A549 (cell line): ENCODE measurements at regions of chr6 and their contacts with region 1.

Region 1: DNA sequence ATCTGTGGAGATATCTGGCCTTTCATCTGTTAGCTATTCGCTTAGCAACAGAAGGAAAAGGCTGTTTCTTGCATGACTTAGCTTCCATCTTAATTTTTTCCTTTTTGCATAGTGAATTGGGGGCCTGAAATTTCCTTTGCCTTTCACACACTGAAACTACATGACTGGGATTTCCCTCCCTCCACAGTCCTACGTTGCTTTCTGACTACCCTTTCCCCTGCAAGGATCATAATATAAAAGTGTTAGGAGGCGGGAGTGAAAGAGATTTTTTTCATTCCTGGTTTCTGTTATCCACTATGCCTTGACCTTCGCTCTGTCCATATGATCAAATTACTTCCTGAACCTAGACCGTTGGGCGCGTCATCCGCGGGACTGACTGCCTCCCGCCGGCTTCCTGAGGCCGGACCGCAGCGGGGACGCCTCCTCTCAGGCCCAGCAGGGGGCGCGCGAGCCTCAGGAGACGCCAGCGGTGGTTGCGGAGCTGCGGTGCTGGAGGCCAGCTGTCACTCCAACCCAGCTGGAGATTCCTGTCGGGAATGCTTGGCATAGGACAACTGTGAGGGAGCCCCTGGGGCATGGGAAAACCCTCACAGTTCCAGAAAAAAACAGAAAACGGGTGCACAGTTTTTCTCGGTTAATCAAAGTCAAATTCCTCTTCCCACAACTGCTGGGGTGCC is 55.6 kb downstream of the MEP1A start:
- DNase-seq: peak; percentile 29 to 70
- ATAC-seq: peak; percentile 99 to 100
- H3K4me3 ChIP-seq: 0 out of 3 replicates have a peak overlapping the region, but pooled peaks have one; percentile 22
- H3K27ac ChIP-seq: peak overlapping the region; percentile 41 to 44; a peak in 2 of 6 replicates
- H3K4me1 ChIP-seq: 0 out of 3 replicates have a peak, but pooled peaks cover 3% of the 10 kb centered on the region
- CTCF ChIP-seq: peak; percentile 83
- EP300 ChIP-seq: no peak
- POLR2A ChIP-seq: no peak
- RAD21 ChIP-seq: peak; percentile 91 to 97

Region 2: GRCh38 chr6:46539866-46540265 is 309.0 kb before region 1 on chr6:
- CTCF ChIA-PET with region 1: no interaction called
- POLR2A ChIA-PET with region 1: no interaction called
- DNase-seq: no peak
- ATAC-seq: no peak
- H3K4me3 ChIP-seq: no peak overlapping the region
- H3K27ac ChIP-seq: no peak overlapping the region
- H3K4me1 ChIP-seq: no peaks in the 10 kb centered on the region
- CTCF ChIP-seq: no peak
- EP300 ChIP-seq: no peak
- POLR2A ChIP-seq: no peak
- RAD21 ChIP-seq: no peak

Region 3: GRCh38 chr6:46652603-46653438 is 196.0 kb before region 1 on chr6 and contains the starts of genes CYP39A1 and SLC25A27:
- CTCF ChIA-PET with region 1: no interaction called
- POLR2A ChIA-PET with region 1: no interaction called
- DNase-seq: peak; percentile 71 to 73
- ATAC-seq: peak; percentile 99 to 100
- H3K4me3 ChIP-seq: peak within 1 kb of the TSS; percentile 57
- H3K27ac ChIP-seq: peak within 1 kb of the TSS; percentile 19 to 79
- H3K4me1 ChIP-seq: peaks cover 10% of the 10 kb centered on the region; the same call in 2 of the 3 replicates
- CTCF ChIP-seq: no peak
- EP300 ChIP-seq: no peak
- POLR2A ChIP-seq: no peak
- RAD21 ChIP-seq: no peak
- polyA plus RNA-seq, gene CYP39A1: 0.48 and 0.78 TPM in 2 replicates
- polyA plus RNA-seq, gene SLC25A27: 3.5 and 4.7 TPM in 2 replicates

Region 4: DNA sequence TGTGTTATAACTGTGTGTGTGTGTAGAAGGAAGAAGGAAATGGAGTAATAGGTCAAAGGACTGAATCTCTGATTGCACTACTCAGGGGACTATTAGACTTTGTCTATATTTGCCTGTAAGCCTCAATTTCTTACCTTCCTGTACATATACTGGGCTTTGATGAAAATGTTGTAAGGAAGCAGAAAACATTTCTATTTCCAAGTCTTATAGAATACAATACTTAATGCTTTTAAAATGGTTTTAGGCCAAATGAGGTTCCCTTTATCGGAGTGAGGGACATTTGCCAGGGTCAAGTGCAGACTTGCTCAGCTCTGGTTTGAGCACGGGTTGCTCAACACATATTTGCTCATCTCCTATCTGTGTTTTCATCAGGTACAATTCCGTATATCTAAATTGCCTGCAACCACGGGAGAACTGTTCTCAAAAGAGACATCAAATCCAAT is 27.3 kb before region 1 on chr6:
- CTCF ChIA-PET with region 1: interaction called, 12 read pairs
- POLR2A ChIA-PET with region 1: no interaction called
- DNase-seq: no peak
- ATAC-seq: no peak
- H3K4me3 ChIP-seq: no peak overlapping the region
- H3K27ac ChIP-seq: no peak overlapping the region
- H3K4me1 ChIP-seq: no peaks in the 10 kb centered on the region
- CTCF ChIP-seq: no peak
- EP300 ChIP-seq: no peak
- POLR2A ChIP-seq: no peak
- RAD21 ChIP-seq: no peak

Region 5: DNA sequence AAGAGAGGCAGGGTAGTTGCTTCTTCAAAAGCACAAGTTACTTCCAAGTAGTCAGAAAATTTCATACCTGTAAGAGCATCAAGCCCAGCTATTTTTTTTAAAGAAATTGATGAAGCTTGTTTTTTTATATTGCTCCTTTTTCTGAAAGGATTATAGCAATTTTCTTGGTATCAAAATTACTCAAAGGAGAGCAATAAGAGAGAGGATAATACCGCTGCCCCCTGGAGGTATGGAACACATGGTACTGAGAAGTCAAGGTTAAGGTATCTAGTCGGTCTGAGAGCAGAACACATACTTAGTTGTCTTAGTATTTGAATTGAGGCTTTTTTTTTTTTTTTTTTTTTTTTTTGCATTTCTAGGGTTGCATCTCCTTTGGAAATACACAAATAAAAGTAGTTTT is 13.6 kb after region 1 on chr6:
- CTCF ChIA-PET with region 1: interaction called, 39 read pairs
- POLR2A ChIA-PET with region 1: no interaction called
- DNase-seq: no peak
- ATAC-seq: no peak
- H3K4me3 ChIP-seq: no peak overlapping the region
- H3K27ac ChIP-seq: no peak overlapping the region
- H3K4me1 ChIP-seq: no peaks in the 10 kb centered on the region
- CTCF ChIP-seq: no peak
- EP300 ChIP-seq: no peak
- POLR2A ChIP-seq: no peak
- RAD21 ChIP-seq: no peak

Region 6: DNA sequence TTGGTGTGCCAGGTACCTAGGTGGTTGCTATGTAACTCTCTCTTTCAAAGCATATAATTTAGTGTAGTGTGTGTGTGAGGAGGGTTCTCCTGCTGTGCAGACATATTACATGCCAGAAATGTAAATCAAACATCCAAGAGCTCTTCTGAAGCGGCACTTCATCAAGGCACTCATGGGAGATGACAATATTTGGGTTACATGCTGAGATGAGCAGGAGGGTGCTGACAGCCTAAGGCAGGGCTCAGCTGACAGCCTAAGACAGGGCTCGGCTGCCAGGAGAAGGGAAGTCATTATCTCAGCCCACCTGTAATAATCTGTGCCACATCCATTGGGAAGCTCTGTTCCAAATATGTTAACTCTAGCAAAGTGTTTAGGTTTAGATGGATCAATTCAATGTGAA is 33.8 kb after region 1 on chr6:
- CTCF ChIA-PET with region 1: no interaction called
- POLR2A ChIA-PET with region 1: no interaction called
- DNase-seq: no peak
- ATAC-seq: no peak
- H3K4me3 ChIP-seq: no peak overlapping the region
- H3K27ac ChIP-seq: no peak overlapping the region
- H3K4me1 ChIP-seq: no peaks in the 10 kb centered on the region
- CTCF ChIP-seq: no peak
- EP300 ChIP-seq: no peak
- POLR2A ChIP-seq: no peak
- RAD21 ChIP-seq: no peak

Region 7: DNA sequence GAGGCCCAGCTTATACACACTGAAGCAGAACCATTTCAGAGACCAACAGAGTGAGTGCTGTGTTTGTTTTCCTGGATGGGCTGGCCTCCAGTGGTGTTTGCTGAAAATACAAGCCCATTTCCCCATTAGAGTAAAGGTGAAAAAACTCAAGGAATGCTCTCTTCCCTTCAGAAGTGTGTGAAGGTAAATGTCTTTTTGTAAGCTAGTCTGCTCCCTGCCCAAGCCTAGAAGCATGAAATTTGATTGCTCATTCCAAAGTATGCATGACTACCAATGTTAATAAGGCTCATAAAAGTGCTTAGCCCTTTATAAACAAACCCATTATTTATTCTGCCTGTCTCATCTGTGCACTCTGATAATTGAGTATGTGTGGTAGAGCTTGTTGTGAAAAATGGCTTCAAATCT is 134.2 kb after region 1 on chr6:
- CTCF ChIA-PET with region 1: interaction called, 31 read pairs
- POLR2A ChIA-PET with region 1: no interaction called
- DNase-seq: peak; percentile 3 to 57
- ATAC-seq: peak; percentile 34 to 47; a peak in 2 of 6 replicates
- H3K4me3 ChIP-seq: no peak overlapping the region
- H3K27ac ChIP-seq: 0 out of 6 replicates have a peak overlapping the region, but pooled peaks of 1 of the 2 experiments have one; percentile 37
- H3K4me1 ChIP-seq: peaks cover 21% of the 10 kb centered on the region; the same call in 2 of the 3 replicates
- CTCF ChIP-seq: no peak
- EP300 ChIP-seq: no peak
- POLR2A ChIP-seq: no peak
- RAD21 ChIP-seq: 0 out of 5 replicates have a peak, but pooled peaks of 1 of the 2 experiments have one; percentile 15

Region 8: DNA sequence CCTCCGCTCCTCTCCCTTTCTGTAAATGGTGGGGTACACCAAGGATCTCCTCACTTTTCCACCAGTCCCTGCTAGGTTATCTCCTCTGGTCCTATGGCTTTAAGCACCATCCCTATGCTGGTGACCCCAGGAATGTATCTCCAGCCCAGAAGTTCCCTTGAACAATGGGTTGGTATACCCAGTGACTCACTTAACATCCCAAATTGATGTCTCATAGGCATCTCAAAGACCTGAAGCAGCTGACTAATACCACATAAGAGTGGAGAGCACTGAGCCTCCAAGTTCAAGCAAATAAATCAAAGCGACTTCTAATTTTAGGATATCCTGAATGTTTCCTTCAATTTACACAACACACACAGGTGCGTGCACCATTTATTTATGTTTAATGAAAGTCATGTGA is 145.0 kb after region 1 on chr6:
- CTCF ChIA-PET with region 1: interaction called, 41 read pairs
- POLR2A ChIA-PET with region 1: no interaction called
- DNase-seq: peak; percentile 58 to 61
- ATAC-seq: peak; percentile 93 to 96
- H3K4me3 ChIP-seq: no peak overlapping the region
- H3K27ac ChIP-seq: peak overlapping the region in 1 of 2 experiments; percentile 45; a peak in 2 of 6 replicates
- H3K4me1 ChIP-seq: peaks cover 12% of the 10 kb centered on the region; the same call in 2 of the 3 replicates
- CTCF ChIP-seq: no peak
- EP300 ChIP-seq: no peak
- POLR2A ChIP-seq: no peak
- RAD21 ChIP-seq: no peak

Region 9: GRCh38 chr6:47047479-47048407 is 198.9 kb after region 1 on chr6:
- CTCF ChIA-PET with region 1: interaction called, 37 read pairs
- POLR2A ChIA-PET with region 1: no interaction called
- DNase-seq: peak; percentile 17 to 83
- ATAC-seq: peak; percentile 96
- H3K4me3 ChIP-seq: no peak overlapping the region
- H3K27ac ChIP-seq: peak overlapping the region; percentile 45 to 51; a peak in 4 of 6 replicates
- H3K4me1 ChIP-seq: peaks cover 15% of the 10 kb centered on the region
- CTCF ChIP-seq: peak; percentile 76
- EP300 ChIP-seq: no peak
- POLR2A ChIP-seq: no peak
- RAD21 ChIP-seq: peak; percentile 82 to 85